CD4-positive, alpha-beta memory T cell (primary cell): ENCODE measurements at regions of chr18 and their contacts with region 1.

Region 1: GRCh38 chr18:12883684-12884405 is at the start of gene PTPN2:
- DNase-seq: peak; percentile 94 to 96 (median 95)
- H3K4me3 ChIP-seq: peak within 1 kb of the TSS; percentile 54 to 81
- H3K4me3 Mint-ChIP-seq: peak within 1 kb of the TSS; percentile 94 to 98 (median 96)
- H3K27ac ChIP-seq: peak within 1 kb of the TSS; percentile 100
- H3K27ac Mint-ChIP-seq: peak within 1 kb of the TSS; percentile 97 to 99 (median 98)
- H3K4me1 ChIP-seq: peaks cover 58% of the 10 kb centered on the region
- H3K4me1 Mint-ChIP-seq: peaks cover 50 to 63% (median 54%) of the 10 kb centered on the region in 4 donors
- H3K27me3 ChIP-seq: no peaks in the 10 kb centered on the region
- H3K27me3 Mint-ChIP-seq: no peaks in the 10 kb centered on the region
- total RNA-seq, gene PTPN2: 65.5 to 69.2 TPM

Region 2: GRCh38 chr18:11908182-11909060 is 975.4 kb before region 1 on chr18 and contains the start of gene MPPE1:
- CTCF ChIA-PET with region 1: no interaction called
- POLR2A ChIA-PET with region 1: no interaction called
- intact Hi-C with region 1: loop called (anchors 5 kb)
- DNase-seq: peak; percentile 82 to 87 (median 83)
- H3K4me3 ChIP-seq: peak within 1 kb of the TSS; percentile 86 to 93
- H3K4me3 Mint-ChIP-seq: peak within 1 kb of the TSS; percentile 94 to 96 (median 96)
- H3K27ac ChIP-seq: peak within 1 kb of the TSS; percentile 93
- H3K27ac Mint-ChIP-seq: peak within 1 kb of the TSS; percentile 89 to 98 (median 96)
- H3K4me1 ChIP-seq: peaks cover 20% of the 10 kb centered on the region
- H3K4me1 Mint-ChIP-seq: peaks cover 11 to 37% (median 21%) of the 10 kb centered on the region in 4 donors
- H3K27me3 ChIP-seq: no peaks in the 10 kb centered on the region
- H3K27me3 Mint-ChIP-seq: no peaks in the 10 kb centered on the region
- total RNA-seq, gene MPPE1: 75.3 to 79.7 TPM

Region 3: GRCh38 chr18:12271376-12272235 is 612.2 kb before region 1 on chr18:
- CTCF ChIA-PET with region 1: no interaction called
- POLR2A ChIA-PET with region 1: no interaction called
- intact Hi-C with region 1: no loop called
- DNase-seq: peak in 4 of 5 donors; percentile 15 to 41 (median 40)
- H3K4me3 ChIP-seq: peak overlapping the region in 1 of 2 donors; percentile 9
- H3K4me3 Mint-ChIP-seq: peak overlapping the region in 7 of 8 donors; percentile 43 to 77 (median 71)
- H3K27ac ChIP-seq: no peak overlapping the region
- H3K27ac Mint-ChIP-seq: no peak overlapping the region
- H3K4me1 ChIP-seq: no peaks in the 10 kb centered on the region
- H3K4me1 Mint-ChIP-seq: peaks cover 0 to 4% (median 1%) of the 10 kb centered on the region in 4 donors
- H3K27me3 ChIP-seq: no peaks in the 10 kb centered on the region
- H3K27me3 Mint-ChIP-seq: peaks cover 4 to 16% of the 10 kb centered on the region in 2 donors

Region 4: GRCh38 chr18:12777500-12777944 is 106.3 kb before region 1 on chr18:
- CTCF ChIA-PET with region 1: no interaction called
- POLR2A ChIA-PET with region 1: interaction called, 36 read pairs
- intact Hi-C with region 1: loop called (anchors 2 kb)
- DNase-seq: no peak
- H3K4me3 ChIP-seq: no peak overlapping the region
- H3K4me3 Mint-ChIP-seq: peak overlapping the region in 1 of 8 donors; percentile 74
- H3K27ac ChIP-seq: no peak overlapping the region
- H3K27ac Mint-ChIP-seq: no peak overlapping the region
- H3K4me1 ChIP-seq: peaks cover 5% of the 10 kb centered on the region
- H3K4me1 Mint-ChIP-seq: peaks cover 3 to 17% (median 10%) of the 10 kb centered on the region in 4 donors
- H3K27me3 ChIP-seq: no peaks in the 10 kb centered on the region
- H3K27me3 Mint-ChIP-seq: no peaks in the 10 kb centered on the region

Region 5: GRCh38 chr18:12843420-12844350 is 40.2 kb before region 1 on chr18:
- CTCF ChIA-PET with region 1: interaction called, 3 read pairs
- POLR2A ChIA-PET with region 1: interaction called, 22 read pairs
- intact Hi-C with region 1: loop called (anchors 2 kb)
- DNase-seq: no peak
- H3K4me3 ChIP-seq: no peak overlapping the region
- H3K4me3 Mint-ChIP-seq: peak overlapping the region in 6 of 8 donors; percentile 2 to 50 (median 14)
- H3K27ac ChIP-seq: peak overlapping the region; percentile 2
- H3K27ac Mint-ChIP-seq: peak overlapping the region; percentile 78 to 92 (median 85)
- H3K4me1 ChIP-seq: peaks cover 59% of the 10 kb centered on the region
- H3K4me1 Mint-ChIP-seq: peaks cover 58 to 87% (median 69%) of the 10 kb centered on the region in 4 donors
- H3K27me3 ChIP-seq: no peaks in the 10 kb centered on the region
- H3K27me3 Mint-ChIP-seq: no peaks in the 10 kb centered on the region

Region 6: GRCh38 chr18:12921178-12921577 is 37.3 kb after region 1 on chr18:
- CTCF ChIA-PET with region 1: interaction called, 3 read pairs
- POLR2A ChIA-PET with region 1: interaction called, 15 read pairs
- intact Hi-C with region 1: no loop called
- DNase-seq: peak; percentile 22 to 50 (median 42)
- H3K4me3 ChIP-seq: peak overlapping the region in 1 of 2 donors; percentile 17
- H3K4me3 Mint-ChIP-seq: peak overlapping the region; percentile 60 to 75 (median 71)
- H3K27ac ChIP-seq: no peak overlapping the region
- H3K27ac Mint-ChIP-seq: peak overlapping the region; percentile 44 to 85 (median 62)
- H3K4me1 ChIP-seq: peaks cover 17% of the 10 kb centered on the region
- H3K4me1 Mint-ChIP-seq: peaks cover 13 to 24% (median 19%) of the 10 kb centered on the region in 4 donors
- H3K27me3 ChIP-seq: no peaks in the 10 kb centered on the region
- H3K27me3 Mint-ChIP-seq: no peaks in the 10 kb centered on the region

Region 7: GRCh38 chr18:12960395-12960794 is 76.5 kb after region 1 on chr18:
- CTCF ChIA-PET with region 1: no interaction called
- POLR2A ChIA-PET with region 1: no interaction called
- intact Hi-C with region 1: no loop called
- DNase-seq: no peak
- H3K4me3 ChIP-seq: no peak overlapping the region
- H3K4me3 Mint-ChIP-seq: no peak overlapping the region
- H3K27ac ChIP-seq: no peak overlapping the region
- H3K27ac Mint-ChIP-seq: no peak overlapping the region
- H3K4me1 ChIP-seq: no peaks in the 10 kb centered on the region
- H3K4me1 Mint-ChIP-seq: peaks cover 0 to 13% (median 9%) of the 10 kb centered on the region in 4 donors
- H3K27me3 ChIP-seq: no peaks in the 10 kb centered on the region
- H3K27me3 Mint-ChIP-seq: no peaks in the 10 kb centered on the region

Region 8: DNA sequence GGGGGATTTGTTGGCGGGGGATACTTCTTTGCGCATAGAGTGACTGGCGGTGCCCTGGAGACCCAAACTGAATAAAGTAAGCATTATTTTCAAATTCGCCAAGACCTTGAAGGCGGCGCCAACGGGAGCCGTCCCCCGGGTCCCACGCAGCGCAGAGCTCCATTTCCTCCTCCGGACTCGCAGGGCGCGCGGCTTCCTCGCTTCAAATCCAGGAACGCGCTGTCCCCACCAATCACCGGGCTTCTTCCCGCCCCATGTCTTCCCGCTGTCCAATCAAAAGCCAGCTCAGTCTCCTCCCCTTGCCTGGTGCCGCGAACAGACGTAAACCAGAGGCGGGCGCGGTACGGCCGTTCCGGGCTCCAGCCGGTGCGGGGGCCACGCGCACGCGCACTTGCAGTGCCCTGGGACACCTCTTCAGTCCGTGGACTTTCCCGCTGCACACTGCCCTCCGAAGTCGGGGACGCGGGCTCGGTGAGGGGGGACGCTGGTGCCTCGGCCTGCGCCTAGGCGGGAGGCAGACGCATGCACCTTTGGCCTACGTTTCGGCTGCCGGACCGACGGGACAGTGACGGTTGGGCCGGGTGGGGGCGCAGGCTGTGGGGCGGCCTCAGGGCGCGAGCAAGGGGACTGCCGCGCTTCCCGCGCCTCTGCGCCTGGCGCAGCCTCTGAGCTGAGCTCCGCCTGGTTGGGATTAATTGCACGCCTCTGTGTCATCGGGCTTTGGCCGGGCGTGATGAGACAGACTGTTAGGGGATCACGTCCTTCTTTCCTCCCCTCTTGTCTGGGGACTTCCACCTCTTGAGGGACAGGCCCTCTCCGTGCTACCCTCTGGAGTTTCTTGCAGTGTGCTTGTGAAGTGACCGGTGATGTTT is 107.4 kb after region 1 on chr18 and contains the start of gene CEP192:
- CTCF ChIA-PET with region 1: no interaction called
- POLR2A ChIA-PET with region 1: interaction called, 9 read pairs
- intact Hi-C with region 1: loop called (anchors 5 kb)
- DNase-seq: peak; percentile 97 to 98 (median 98)
- H3K4me3 ChIP-seq: peak within 1 kb of the TSS; percentile 70 to 86
- H3K4me3 Mint-ChIP-seq: peak within 1 kb of the TSS; percentile 93 to 99 (median 98)
- H3K27ac ChIP-seq: peak within 1 kb of the TSS; percentile 93
- H3K27ac Mint-ChIP-seq: peak within 1 kb of the TSS; percentile 88 to 99 (median 97)
- H3K4me1 ChIP-seq: peaks cover 42% of the 10 kb centered on the region
- H3K4me1 Mint-ChIP-seq: peaks cover 0 to 29% (median 23%) of the 10 kb centered on the region in 4 donors
- H3K27me3 ChIP-seq: no peaks in the 10 kb centered on the region
- H3K27me3 Mint-ChIP-seq: no peaks in the 10 kb centered on the region
- total RNA-seq, gene CEP192: 42.5 to 45.5 TPM

Region 9: GRCh38 chr18:13006531-13007247 is 122.8 kb after region 1 on chr18:
- CTCF ChIA-PET with region 1: no interaction called
- POLR2A ChIA-PET with region 1: no interaction called
- intact Hi-C with region 1: no loop called
- DNase-seq: no peak
- H3K4me3 ChIP-seq: no peak overlapping the region
- H3K4me3 Mint-ChIP-seq: no peak overlapping the region
- H3K27ac ChIP-seq: no peak overlapping the region
- H3K27ac Mint-ChIP-seq: peak overlapping the region in 5 of 7 donors; percentile 38 to 69 (median 52)
- H3K4me1 ChIP-seq: no peaks in the 10 kb centered on the region
- H3K4me1 Mint-ChIP-seq: peaks cover 6 to 13% (median 8%) of the 10 kb centered on the region in 4 donors
- H3K27me3 ChIP-seq: no peaks in the 10 kb centered on the region
- H3K27me3 Mint-ChIP-seq: no peaks in the 10 kb centered on the region

Region 10: GRCh38 chr18:13026583-13027270 is 142.9 kb after region 1 on chr18:
- CTCF ChIA-PET with region 1: no interaction called
- POLR2A ChIA-PET with region 1: no interaction called
- intact Hi-C with region 1: no loop called
- DNase-seq: no peak
- H3K4me3 ChIP-seq: no peak overlapping the region
- H3K4me3 Mint-ChIP-seq: no peak overlapping the region
- H3K27ac ChIP-seq: no peak overlapping the region
- H3K27ac Mint-ChIP-seq: peak overlapping the region in 2 of 7 donors; percentile 15 to 30
- H3K4me1 ChIP-seq: no peaks in the 10 kb centered on the region
- H3K4me1 Mint-ChIP-seq: peaks cover 5 to 15% (median 12%) of the 10 kb centered on the region in 4 donors
- H3K27me3 ChIP-seq: no peaks in the 10 kb centered on the region
- H3K27me3 Mint-ChIP-seq: no peaks in the 10 kb centered on the region